Activated CD4-positive, alpha-beta memory T cell treated with anti-CD3 and anti-CD28 coated beads, Interleukin-2, amount 10 ng/mL, durations not matched to agents 7 days and 5 days (primary cell): ENCODE measurements at regions of chr11 and their contacts with region 1.

Region 1: GRCh38 chr11:122655527-122656072 is at the start of gene UBASH3B:
- DNase-seq: peak; percentile 68
- H3K4me3 Mint-ChIP-seq: peak within 1 kb of the TSS; percentile 90
- H3K27ac Mint-ChIP-seq: peak within 1 kb of the TSS; percentile 70
- H3K4me1 Mint-ChIP-seq: peaks cover 21% of the 10 kb centered on the region
- H3K27me3 Mint-ChIP-seq: peaks cover 32% of the 10 kb centered on the region
- total RNA-seq, gene UBASH3B: 18.4 to 20.9 TPM

Region 2: GRCh38 chr11:122383186-122383585 is 272.4 kb before region 1 on chr11:
- CTCF ChIA-PET with region 1: no interaction called
- POLR2A ChIA-PET with region 1: no interaction called
- DNase-seq: no peak
- H3K4me3 Mint-ChIP-seq: no peak overlapping the region
- H3K27ac Mint-ChIP-seq: no peak overlapping the region
- H3K4me1 Mint-ChIP-seq: no peaks in the 10 kb centered on the region
- H3K27me3 Mint-ChIP-seq: no peaks in the 10 kb centered on the region

Region 3: DNA sequence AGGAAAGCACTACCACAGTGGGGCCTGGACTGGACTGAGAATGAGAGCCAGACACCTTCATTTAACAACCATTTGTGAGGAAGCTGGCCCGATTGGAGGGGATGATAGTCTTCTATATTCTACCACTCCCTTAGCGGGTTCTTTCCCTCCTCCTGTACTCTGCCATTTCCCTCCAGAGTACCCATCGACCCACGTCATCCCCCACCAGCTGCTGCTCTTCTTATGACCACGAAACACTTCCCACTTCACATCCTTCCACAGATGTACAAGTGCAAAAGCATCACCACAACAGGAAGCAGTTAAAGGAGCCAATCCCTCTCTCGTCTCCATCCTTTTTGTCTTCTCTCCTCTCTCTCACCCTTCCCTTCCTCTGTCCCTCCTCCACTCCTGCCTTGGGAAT is 18.1 kb before region 1 on chr11:
- CTCF ChIA-PET with region 1: interaction called, 11 read pairs
- POLR2A ChIA-PET with region 1: no interaction called
- DNase-seq: no peak
- H3K4me3 Mint-ChIP-seq: no peak overlapping the region
- H3K27ac Mint-ChIP-seq: no peak overlapping the region
- H3K4me1 Mint-ChIP-seq: peaks cover 6% of the 10 kb centered on the region
- H3K27me3 Mint-ChIP-seq: peaks cover 2% of the 10 kb centered on the region

Region 4: GRCh38 chr11:122697636-122698167 is 42.1 kb after region 1 on chr11:
- CTCF ChIA-PET with region 1: interaction called, 14 read pairs
- POLR2A ChIA-PET with region 1: interaction called, 20 read pairs
- DNase-seq: peak; percentile 48
- H3K4me3 Mint-ChIP-seq: peak overlapping the region; percentile 46
- H3K27ac Mint-ChIP-seq: peak overlapping the region; percentile 92
- H3K4me1 Mint-ChIP-seq: peaks cover 52% of the 10 kb centered on the region
- H3K27me3 Mint-ChIP-seq: no peaks in the 10 kb centered on the region

Region 5: DNA sequence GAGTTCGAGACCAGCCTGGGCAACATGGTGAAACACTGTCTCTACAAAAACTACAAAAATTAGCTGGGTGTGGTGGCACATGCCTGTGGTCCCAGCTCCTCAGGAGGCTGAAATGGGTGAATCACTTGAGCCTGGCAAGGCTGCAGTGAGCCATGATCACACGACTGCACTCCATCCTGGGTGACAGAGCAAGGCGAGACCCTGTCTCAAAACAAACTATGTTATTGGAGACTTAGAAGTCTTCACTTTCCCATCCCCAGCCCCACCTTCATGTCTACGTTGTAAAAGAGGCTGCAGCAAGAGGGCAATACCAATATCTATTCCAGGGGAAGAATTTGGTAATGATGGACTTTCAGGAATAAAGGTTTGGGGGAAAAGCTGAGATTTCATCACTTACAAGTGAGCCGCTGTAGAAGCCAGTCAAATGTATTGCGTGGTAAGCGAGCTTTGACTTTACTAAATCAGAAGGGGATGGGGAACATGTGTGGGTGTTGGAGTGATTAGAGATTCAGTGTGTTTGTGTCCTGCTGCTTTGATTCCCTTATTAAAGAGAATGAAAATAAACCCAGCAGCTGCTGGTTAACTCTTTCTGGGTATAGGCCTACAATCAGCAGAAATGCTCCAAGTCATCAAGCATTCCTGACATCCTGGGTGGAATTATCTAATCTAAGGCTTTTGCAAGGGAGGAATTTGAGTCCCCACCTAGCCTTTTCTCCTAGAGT is 53.6 kb after region 1 on chr11:
- CTCF ChIA-PET with region 1: no interaction called
- POLR2A ChIA-PET with region 1: no interaction called
- DNase-seq: no peak
- H3K4me3 Mint-ChIP-seq: no peak overlapping the region
- H3K27ac Mint-ChIP-seq: no peak overlapping the region
- H3K4me1 Mint-ChIP-seq: peaks cover 11% of the 10 kb centered on the region
- H3K27me3 Mint-ChIP-seq: no peaks in the 10 kb centered on the region

Region 6: GRCh38 chr11:122743949-122744348 is 88.3 kb after region 1 on chr11:
- CTCF ChIA-PET with region 1: interaction called, 179 read pairs
- POLR2A ChIA-PET with region 1: interaction called, 28 read pairs
- DNase-seq: peak; percentile 82
- H3K4me3 Mint-ChIP-seq: no peak overlapping the region
- H3K27ac Mint-ChIP-seq: no peak overlapping the region
- H3K4me1 Mint-ChIP-seq: peaks cover 1% of the 10 kb centered on the region
- H3K27me3 Mint-ChIP-seq: peaks cover 3% of the 10 kb centered on the region